Left cardiac atrium (tissue), 4 donors: ENCODE measurements at regions of chr6 and their contacts with region 1.

Region 1: DNA sequence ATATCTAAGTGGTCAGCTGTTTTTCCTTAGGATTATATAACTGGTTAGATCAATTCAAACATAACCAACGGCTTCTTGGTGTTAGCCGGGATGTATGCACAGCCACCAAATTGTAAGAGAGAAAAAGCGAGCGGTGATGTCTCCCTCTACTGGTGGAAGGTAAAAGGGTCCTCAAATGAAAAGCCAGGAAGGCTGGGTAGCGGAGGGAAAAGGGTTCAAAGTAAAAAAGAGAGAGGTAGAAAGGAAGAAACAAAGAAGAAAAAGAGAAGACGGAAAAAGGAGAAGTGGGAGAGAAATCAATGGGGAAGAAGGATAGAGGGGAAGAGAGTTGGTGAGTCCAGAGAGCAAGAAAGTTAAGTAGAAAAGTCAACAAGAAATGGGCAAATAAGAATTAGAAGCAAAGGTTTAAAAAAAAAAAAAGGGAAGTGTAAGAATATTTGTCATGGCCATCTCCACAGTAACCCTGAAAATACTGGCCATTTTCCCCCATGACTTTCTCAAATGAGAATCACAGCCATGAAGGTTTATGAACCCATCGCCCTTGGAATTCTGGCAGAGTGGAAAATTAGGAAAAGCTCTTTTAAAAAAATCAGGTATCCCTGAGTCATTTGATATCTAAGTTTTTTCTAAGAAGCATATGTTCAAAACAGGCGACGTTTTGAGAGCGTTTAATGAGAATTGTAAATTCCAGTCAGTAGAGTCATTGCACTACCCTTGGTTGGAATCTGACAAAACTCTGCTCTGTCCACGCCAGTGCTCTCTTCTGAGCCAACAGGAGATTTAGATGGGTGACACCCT is 155.6 kb upstream of the SNX9 start:
- DNase-seq: peak; percentile 45
- ATAC-seq: peak in 1 of 2 donors; percentile 31

Region 2: GRCh38 chr6:157314705-157315321 is 352.6 kb before region 1 on chr6:
- intact Hi-C with region 1: loop called (anchors 2 to 10 kb)
- DNase-seq: no peak
- ATAC-seq: peak; percentile 50 to 87

Region 3: DNA sequence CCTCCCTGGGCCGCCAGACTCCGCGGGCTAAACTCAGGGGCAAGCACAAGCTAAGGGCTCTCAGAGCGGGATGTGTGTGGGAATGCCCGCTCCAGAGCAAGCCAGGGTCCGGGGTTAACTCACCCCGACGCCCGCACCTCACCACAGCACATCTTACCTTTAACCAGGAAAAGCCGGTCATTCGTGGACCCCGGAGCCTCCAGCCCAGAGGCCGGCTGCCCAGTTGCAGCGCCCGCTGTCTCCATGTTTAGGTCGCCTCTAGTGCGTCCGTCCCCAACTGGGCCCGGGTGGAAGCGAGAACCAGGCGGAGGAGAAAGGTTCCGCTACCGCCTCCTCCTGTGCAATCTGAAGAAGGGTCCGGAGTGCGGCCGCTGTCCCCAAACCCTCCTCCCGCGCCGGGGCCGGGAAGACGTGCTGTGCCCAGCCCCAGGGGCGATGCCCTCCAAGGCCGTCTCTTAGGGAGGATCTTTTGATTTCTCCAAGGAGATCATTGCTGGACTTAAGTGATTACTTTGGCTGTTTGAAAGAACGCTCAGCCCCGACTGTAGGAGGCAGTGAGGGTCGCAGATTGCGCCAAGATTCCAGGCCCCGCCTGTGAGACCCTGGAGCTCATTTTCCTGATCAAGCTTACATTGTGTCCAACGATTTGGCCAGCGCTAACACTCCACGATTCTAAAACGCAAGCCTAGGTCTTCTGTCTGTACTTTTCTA is 344.0 kb before region 1 on chr6 and contains the start of gene TMEM242:
- intact Hi-C with region 1: loop called (anchors 2 to 10 kb)
- DNase-seq: peak; percentile 91
- ATAC-seq: peak; percentile 94 to 96
- total RNA-seq, gene TMEM242: 12.4 to 14.5 TPM

Region 4: DNA sequence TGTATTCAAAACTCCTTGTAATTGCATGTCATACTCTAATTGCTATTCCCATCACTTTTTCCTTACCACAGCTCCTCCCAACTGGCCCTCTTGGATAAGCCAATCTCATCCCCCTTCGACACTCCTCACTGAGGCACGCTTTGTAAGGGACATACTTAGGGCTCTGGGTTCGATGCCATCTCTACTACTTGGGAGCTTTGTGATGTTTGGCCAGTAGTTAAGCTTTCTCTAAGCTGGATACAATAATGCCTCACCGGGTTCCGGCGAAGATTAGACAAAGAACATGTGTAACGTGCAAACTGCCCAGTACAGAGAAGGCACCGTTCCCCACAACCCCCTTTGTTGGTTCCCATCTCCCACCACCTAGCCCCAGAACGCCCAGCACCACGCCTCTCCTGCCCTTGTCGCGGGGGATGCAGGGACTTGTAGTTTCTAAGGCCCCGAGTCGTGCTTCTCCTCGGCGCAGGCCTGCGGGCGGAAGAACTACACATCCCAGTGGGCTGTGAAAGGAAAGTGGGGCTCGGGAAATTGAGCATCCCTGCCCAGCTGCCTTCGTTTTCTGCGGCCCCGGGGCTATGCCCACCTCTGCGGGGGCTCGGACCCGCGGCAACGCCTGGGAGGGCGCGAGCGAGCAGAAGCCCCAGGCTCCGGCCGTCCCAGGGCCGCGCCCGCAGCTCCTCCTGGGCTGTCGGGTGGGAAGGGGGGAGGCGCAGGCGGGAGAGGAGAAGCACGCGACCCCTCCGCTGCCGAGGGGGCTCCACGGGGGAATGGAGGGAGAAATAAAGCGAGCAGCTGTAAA is 287.6 kb before region 1 on chr6:
- intact Hi-C with region 1: loop called in 1 of 2 experiments (anchors 5 kb)
- DNase-seq: peak; percentile 93
- ATAC-seq: peak; percentile 89 to 95

Region 5: DNA sequence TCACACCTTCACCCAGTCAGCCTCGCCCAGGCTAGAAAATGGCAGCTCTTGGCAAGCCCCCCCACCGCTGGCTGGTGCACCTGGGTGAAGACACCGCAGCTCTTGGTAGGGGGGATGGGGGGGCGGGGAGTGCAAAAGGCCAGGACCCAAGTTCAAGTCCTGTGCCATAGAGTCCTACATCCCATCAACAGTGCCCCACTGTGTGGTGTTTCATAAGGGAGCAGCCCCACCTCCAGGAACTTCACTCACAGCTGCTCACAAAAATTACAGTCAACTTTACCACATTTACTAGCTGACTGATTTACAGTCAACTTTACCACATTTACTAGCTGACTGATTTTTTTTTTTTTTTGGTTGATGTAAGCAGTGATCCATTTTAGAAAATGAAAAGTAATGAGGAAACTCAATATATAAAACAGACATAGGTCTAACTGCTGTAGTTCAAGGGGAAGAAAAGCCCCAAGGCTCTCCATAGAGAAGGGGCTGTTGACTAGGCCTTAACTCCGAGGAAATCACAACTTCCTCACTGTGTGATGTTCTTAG is 53.3 kb before region 1 on chr6:
- intact Hi-C with region 1: loop called in 1 of 2 experiments (anchors 10 kb)
- DNase-seq: no peak
- ATAC-seq: peak in 1 of 2 donors; percentile 45

Region 6: GRCh38 chr6:157873735-157874344 is 206.4 kb after region 1 on chr6:
- intact Hi-C with region 1: loop called in 1 of 2 experiments (anchors 10 kb)
- DNase-seq: peak; percentile 82
- ATAC-seq: peak; percentile 68 to 76